OCI-LY7 (cell line): ENCODE measurements at regions of chr4 and their contacts with region 1.

Region 1: GRCh38 chr4:150242820-150243458 is 164.7 kb downstream of the DCLK2 start:
- DNase-seq: peak; percentile 21
- H3K4me3 ChIP-seq: no peak overlapping the region
- H3K27ac ChIP-seq: no peak overlapping the region
- H3K4me1 ChIP-seq: no peaks in the 10 kb centered on the region
- CTCF ChIP-seq: peak; percentile 87

Region 2: GRCh38 chr4:149296503-149296902 is 946.4 kb before region 1 on chr4:
- CTCF ChIA-PET with region 1: no interaction called
- POLR2A ChIA-PET with region 1: no interaction called
- intact Hi-C with region 1: no loop called
- DNase-seq: no peak
- H3K4me3 ChIP-seq: no peak overlapping the region
- H3K27ac ChIP-seq: no peak overlapping the region
- H3K4me1 ChIP-seq: no peaks in the 10 kb centered on the region
- CTCF ChIP-seq: no peak

Region 3: DNA sequence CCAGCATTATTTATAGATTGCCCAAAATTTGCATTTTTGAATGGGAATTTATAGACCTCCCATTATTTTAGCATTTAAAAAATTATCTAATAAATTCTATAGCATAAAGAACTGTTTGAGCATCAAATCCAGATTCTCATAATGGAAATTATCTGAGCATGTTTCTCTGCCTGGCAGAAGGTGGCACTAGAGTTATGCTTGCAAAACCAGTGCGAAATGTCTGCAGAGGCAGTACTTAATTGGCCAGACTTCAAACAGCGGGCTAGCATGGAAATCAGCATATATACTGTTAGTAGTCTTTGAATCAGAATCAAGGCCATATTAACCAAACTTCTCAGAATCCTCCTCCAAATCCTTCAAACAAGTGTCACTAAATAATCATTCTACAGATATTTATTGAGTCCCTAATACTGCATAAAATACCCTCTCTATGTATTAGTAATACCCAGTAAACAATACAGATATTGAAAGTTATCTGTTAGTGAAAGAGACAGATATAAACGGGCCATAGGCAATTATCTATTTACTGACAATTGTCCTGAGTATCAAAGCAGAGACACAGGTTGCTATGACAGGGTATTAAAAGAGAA is 243.4 kb before region 1 on chr4:
- CTCF ChIA-PET with region 1: no interaction called
- POLR2A ChIA-PET with region 1: no interaction called
- intact Hi-C with region 1: loop called (anchors 5 kb)
- DNase-seq: peak; percentile 32
- H3K4me3 ChIP-seq: no peak overlapping the region
- H3K27ac ChIP-seq: no peak overlapping the region
- H3K4me1 ChIP-seq: no peaks in the 10 kb centered on the region
- CTCF ChIP-seq: peak; percentile 80